ENCODE measurements at regions of chr13 and their contacts with region 1.

Region 1: DNA sequence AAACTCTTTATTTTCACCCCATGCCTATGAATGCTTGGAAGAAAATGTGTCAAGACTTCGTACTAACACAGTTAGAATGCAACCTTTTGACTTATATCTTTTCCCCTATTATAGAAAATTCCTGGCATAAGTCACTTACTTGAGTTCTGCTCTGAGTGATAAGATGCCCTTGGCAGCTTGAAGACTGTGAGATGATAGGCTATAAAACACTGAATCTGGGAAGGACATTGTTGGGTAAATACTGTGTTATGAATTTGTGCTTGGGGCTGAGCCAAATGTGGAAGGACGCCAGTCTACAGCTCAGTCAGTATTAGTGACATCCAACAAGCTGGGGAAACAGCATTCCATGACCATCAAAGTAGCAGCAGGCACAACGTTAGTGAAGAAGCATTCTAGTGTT is 368.0 kb upstream of the SGCG start:
- DNase-seq: no peak
- H3K4me3 ChIP-seq: no peak overlapping the region
- H3K27ac ChIP-seq: no peak overlapping the region
- H3K4me1 ChIP-seq: no peaks in the 10 kb centered on the region
- CTCF ChIP-seq: no peak

Region 2: DNA sequence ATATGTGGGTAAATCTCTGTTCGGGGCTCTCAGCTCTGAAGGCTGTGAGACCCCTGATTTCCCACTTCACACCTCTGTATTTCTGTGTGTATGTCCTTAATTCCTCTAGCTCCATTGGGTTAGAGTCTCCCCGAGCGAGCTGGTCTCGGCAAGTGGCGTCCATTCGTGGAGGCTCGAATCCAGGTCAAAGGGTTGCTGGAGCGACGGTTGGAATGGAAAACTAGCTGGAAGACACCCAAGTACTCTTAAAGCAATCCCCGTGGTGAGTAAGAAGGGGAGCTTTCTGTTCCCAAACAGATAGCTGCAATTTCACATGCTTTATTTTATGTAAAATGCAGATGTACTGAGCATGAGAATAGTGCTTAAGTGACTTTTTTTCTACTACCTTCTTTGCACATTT is 90.5 kb after region 1 on chr13:
- CTCF ChIA-PET with region 1: interaction called, 10 read pairs
- POLR2A ChIA-PET with region 1: no interaction called
- intact Hi-C with region 1: no loop called
- DNase-seq: no peak
- H3K4me3 ChIP-seq: no peak overlapping the region
- H3K27ac ChIP-seq: no peak overlapping the region
- H3K4me1 ChIP-seq: no peaks in the 10 kb centered on the region
- CTCF ChIP-seq: no peak

Measured in OCI-LY7 (cell line).